Lower leg skin (tissue), 4 donors: ENCODE measurements at regions of chr22 and their contacts with region 1.

Region 1: GRCh38 chr22:40024201-40025061 is 29.7 kb downstream of the FAM83F start:
- DNase-seq: no peak
- H3K4me3 ChIP-seq: no peak overlapping the region
- CTCF ChIP-seq: peak in 1 of 3 donors; percentile 25
- POLR2A ChIP-seq: no peak

Region 2: GRCh38 chr22:39710380-39711150 is 313.9 kb before region 1 on chr22:
- intact Hi-C with region 1: no loop called
- DNase-seq: no peak
- H3K4me3 ChIP-seq: no peak overlapping the region
- CTCF ChIP-seq: no peak
- POLR2A ChIP-seq: no peak

Region 3: GRCh38 chr22:39785232-39785631 is 239.2 kb before region 1 on chr22:
- intact Hi-C with region 1: no loop called
- DNase-seq: no peak
- H3K4me3 ChIP-seq: no peak overlapping the region
- CTCF ChIP-seq: no peak
- POLR2A ChIP-seq: no peak

Region 4: GRCh38 chr22:40346178-40347118 is 322.0 kb after region 1 on chr22 and contains the start of gene ADSL:
- intact Hi-C with region 1: loop called (anchors 10 kb)
- DNase-seq: peak; percentile 82 to 97
- H3K4me3 ChIP-seq: peak within 1 kb of the TSS; percentile 49
- CTCF ChIP-seq: no peak
- POLR2A ChIP-seq: peak in 1 of 2 donors; percentile 16
- total RNA-seq, gene ADSL: 26.7 to 49.0 (median 36.6) TPM